PC-9 (cell line): ENCODE measurements at regions of chr3 and their contacts with region 1.

Region 1: GRCh38 chr3:135965506-135966270 is at the start of gene PPP2R3A:
- DNase-seq: peak; percentile 70 to 93
- H3K4me3 ChIP-seq: peak within 1 kb of the TSS; percentile 85
- H3K27ac ChIP-seq: peak within 1 kb of the TSS; percentile 49
- H3K4me1 ChIP-seq: peaks cover 32% of the 10 kb centered on the region
- H3K27me3 ChIP-seq: no peaks in the 10 kb centered on the region
- CTCF ChIP-seq: no peak
- total RNA-seq, gene PPP2R3A: 30.0 and 42.6 TPM in 2 replicates

Region 2: GRCh38 chr3:135905058-135905724 is 60.5 kb before region 1 on chr3:
- CTCF ChIA-PET with region 1: no interaction called
- POLR2A ChIA-PET with region 1: no interaction called
- intact Hi-C with region 1: loop called (anchors 1 kb)
- DNase-seq: no peak
- H3K4me3 ChIP-seq: no peak overlapping the region
- H3K27ac ChIP-seq: no peak overlapping the region
- H3K4me1 ChIP-seq: peaks cover 26% of the 10 kb centered on the region
- H3K27me3 ChIP-seq: no peaks in the 10 kb centered on the region
- CTCF ChIP-seq: no peak

Region 3: DNA sequence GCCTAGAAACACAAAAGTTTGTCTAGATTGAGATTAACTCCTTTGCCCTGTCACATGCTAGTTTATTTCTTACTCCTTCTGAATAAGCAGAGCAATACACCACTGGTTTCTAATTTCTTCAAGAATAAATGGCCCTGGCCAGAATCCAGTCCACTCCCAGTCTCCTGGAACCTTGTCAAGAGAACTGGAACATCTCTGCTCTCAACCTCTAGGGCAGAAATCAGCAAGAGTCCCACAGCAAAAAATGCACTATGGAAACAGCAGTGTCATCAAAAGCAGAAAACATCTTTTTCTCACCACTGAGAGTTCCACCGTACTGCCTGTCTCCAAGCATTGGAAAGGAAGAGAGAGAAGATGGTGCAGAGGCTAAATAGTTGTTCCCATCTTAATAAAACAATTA is 36.0 kb before region 1 on chr3:
- CTCF ChIA-PET with region 1: no interaction called
- POLR2A ChIA-PET with region 1: no interaction called
- intact Hi-C with region 1: loop called (anchors 2 kb)
- DNase-seq: peak in 1 of 2 experiments; percentile 21
- H3K4me3 ChIP-seq: no peak overlapping the region
- H3K27ac ChIP-seq: no peak overlapping the region
- H3K4me1 ChIP-seq: peaks cover 22% of the 10 kb centered on the region
- H3K27me3 ChIP-seq: no peaks in the 10 kb centered on the region
- CTCF ChIP-seq: no peak

Region 4: DNA sequence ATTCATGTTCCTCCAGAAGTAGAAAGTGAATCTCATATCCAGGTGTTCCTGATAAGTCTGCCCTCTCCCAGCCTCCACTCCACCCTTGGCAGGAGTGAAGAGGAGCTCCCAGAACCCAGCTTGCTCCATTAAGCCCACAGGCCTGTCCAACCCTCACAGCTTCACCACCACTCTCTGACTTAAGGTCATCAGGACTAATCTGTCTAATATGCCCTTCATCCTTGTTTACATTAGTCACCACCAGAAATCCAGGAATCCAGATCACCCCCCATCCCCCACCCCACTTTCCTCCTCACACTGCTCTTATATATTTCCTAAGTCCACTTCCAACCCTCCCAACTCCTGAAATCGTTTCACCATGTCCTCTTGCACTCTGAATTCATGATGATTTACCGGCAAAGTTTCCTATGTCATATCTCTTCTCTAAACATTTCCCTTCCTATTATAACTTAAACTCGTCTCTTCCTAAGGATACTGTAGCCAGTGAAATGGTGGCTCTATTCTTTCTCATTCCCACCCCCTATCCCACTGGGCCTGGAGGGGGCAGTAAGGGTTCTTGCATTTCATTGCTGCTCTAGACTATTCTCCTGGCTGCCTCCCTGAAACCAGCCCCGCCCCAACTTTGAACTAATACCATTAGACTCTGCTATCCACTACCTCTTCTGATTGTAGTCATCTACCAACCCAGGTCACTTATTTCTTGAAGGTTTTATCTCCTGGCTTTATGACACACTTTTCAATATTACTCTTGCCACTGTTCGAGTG is 43.2 kb after region 1 on chr3:
- CTCF ChIA-PET with region 1: interaction called, 3 read pairs
- POLR2A ChIA-PET with region 1: interaction called, 4 read pairs
- intact Hi-C with region 1: loop called (anchors 1 kb)
- DNase-seq: peak; percentile 40 to 59
- H3K4me3 ChIP-seq: no peak overlapping the region
- H3K27ac ChIP-seq: peak overlapping the region; percentile 20; the same call in 1 of the 2 replicates
- H3K4me1 ChIP-seq: peaks cover 15% of the 10 kb centered on the region
- H3K27me3 ChIP-seq: no peaks in the 10 kb centered on the region
- CTCF ChIP-seq: no peak

Region 5: GRCh38 chr3:136042608-136043221 is 77.0 kb after region 1 on chr3:
- CTCF ChIA-PET with region 1: interaction called, 4 read pairs
- POLR2A ChIA-PET with region 1: no interaction called
- intact Hi-C with region 1: loop called (anchors 1 kb)
- DNase-seq: peak in 1 of 2 experiments; percentile 48
- H3K4me3 ChIP-seq: no peak overlapping the region
- H3K27ac ChIP-seq: no peak overlapping the region
- H3K4me1 ChIP-seq: no peaks in the 10 kb centered on the region
- H3K27me3 ChIP-seq: no peaks in the 10 kb centered on the region
- CTCF ChIP-seq: peak; percentile 82

Region 6: GRCh38 chr3:136856665-136857064 is 891.0 kb after region 1 on chr3:
- CTCF ChIA-PET with region 1: interaction called, 15 read pairs
- POLR2A ChIA-PET with region 1: no interaction called
- intact Hi-C with region 1: no loop called
- DNase-seq: no peak
- H3K4me3 ChIP-seq: no peak overlapping the region
- H3K27ac ChIP-seq: no peak overlapping the region
- H3K4me1 ChIP-seq: peaks cover 10% of the 10 kb centered on the region
- H3K27me3 ChIP-seq: no peaks in the 10 kb centered on the region
- CTCF ChIP-seq: no peak